Common myeloid progenitor, CD34-positive (primary cell): ENCODE measurements at regions of chr11 and their contacts with region 1.

Region 1: GRCh38 chr11:46889689-46890475 is 28.5 kb downstream of the LRP4 start:
- DNase-seq: peak; percentile 78 to 88 (median 79)
- H3K4me3 ChIP-seq: no peak overlapping the region
- H3K27ac ChIP-seq: no peak overlapping the region
- H3K4me1 ChIP-seq: no peaks in the 10 kb centered on the region
- H3K27me3 ChIP-seq: no peaks in the 10 kb centered on the region

Region 2: DNA sequence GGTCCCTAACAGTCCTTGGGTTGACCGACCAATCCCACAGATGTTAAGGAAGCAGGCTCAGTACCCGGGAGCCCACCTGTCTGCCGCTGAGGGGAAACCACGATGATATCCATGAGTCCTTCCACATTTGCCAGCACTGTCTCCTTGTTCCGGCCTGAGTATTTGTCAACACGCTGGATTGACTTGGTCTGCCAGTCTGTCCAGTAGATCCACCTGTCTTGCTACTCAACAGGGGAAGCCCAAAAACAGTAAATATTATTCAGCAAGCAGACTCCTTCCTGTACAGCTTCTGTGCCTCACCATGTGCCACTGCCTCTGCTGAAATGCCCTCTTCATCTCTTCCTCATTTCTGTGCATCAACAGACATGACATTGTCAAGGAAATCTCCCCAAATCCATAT is 21.0 kb before region 1 on chr11:
- CTCF ChIA-PET with region 1: no interaction called
- POLR2A ChIA-PET with region 1: no interaction called
- DNase-seq: no peak
- H3K4me3 ChIP-seq: no peak overlapping the region
- H3K27ac ChIP-seq: no peak overlapping the region
- H3K4me1 ChIP-seq: no peaks in the 10 kb centered on the region
- H3K27me3 ChIP-seq: no peaks in the 10 kb centered on the region

Region 3: GRCh38 chr11:47161134-47161854 is 271.4 kb after region 1 on chr11:
- CTCF ChIA-PET with region 1: interaction called, 106 read pairs
- POLR2A ChIA-PET with region 1: no interaction called
- DNase-seq: peak; percentile 59 to 86 (median 81)
- H3K4me3 ChIP-seq: no peak overlapping the region
- H3K27ac ChIP-seq: no peak overlapping the region
- H3K4me1 ChIP-seq: peaks cover 0 to 20% (median 14%) of the 10 kb centered on the region in 4 experiments
- H3K27me3 ChIP-seq: no peaks in the 10 kb centered on the region